Activated CD8-positive, alpha-beta T cell treated with anti-CD3 and anti-CD28 coated beads, Interleukin-2, amount 10 ng/mL, durations not matched to agents 7 days and 5 days (primary cell): ENCODE measurements at regions of chr19 and their contacts with region 1.

Region 1: DNA sequence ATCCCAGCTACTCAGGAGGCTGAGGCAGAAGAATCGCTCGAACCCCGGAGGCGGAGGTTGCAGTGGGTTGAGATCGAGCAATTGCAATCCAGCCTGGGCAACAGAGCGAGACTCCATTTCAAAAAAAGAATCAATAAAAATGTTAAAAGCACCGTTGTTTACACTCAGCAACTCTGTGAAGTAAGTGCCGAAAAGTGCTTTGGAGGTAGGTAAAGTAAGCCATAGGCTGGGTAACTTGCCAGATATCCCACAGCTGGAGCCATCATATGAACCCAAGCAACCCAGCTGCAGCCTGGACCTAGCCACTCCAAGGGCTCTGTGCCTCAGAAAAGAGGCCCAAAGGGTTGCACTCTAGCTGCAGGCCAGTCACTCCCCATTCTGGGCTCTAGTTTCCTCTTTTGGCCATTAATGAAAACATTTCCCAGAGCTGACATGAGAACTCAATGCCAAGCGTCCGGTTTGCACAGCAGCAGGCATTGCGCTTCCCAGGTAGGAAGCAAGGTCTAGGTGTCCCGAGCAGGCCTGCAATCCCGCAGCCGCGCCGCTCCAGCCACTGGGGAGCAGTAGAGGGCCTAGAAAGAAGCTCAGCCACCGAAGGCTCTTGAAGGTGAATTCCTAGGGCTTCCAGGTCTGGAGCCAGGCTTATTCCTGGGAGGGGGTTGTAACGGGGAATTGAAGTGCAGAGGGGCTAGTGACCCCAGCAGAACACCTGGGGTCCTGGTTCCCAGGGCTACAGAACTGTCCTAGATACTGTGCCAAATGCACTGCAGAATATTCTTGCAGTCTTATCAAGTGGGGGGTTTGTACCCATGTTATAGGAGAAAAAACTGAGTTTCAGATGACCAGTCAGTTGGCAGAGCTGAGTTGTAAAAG is 4.1 kb upstream of the CD79A start:
- DNase-seq: peak; percentile 79
- ATAC-seq: no peak
- H3K4me3 Mint-ChIP-seq: no peak overlapping the region
- H3K27ac Mint-ChIP-seq: peak overlapping the region; percentile 94
- H3K4me1 Mint-ChIP-seq: peaks cover 93% of the 10 kb centered on the region
- H3K27me3 Mint-ChIP-seq: no peaks in the 10 kb centered on the region

Region 2: GRCh38 chr19:41859618-41860418 is 13.2 kb before region 1 on chr19 and contains the start of gene RPS19:
- CTCF ChIA-PET with region 1: interaction called, 41 read pairs
- POLR2A ChIA-PET with region 1: interaction called, 39 read pairs
- DNase-seq: peak; percentile 99
- ATAC-seq: peak; percentile 87
- H3K4me3 Mint-ChIP-seq: peak within 1 kb of the TSS; percentile 88
- H3K27ac Mint-ChIP-seq: peak within 1 kb of the TSS; percentile 96
- H3K4me1 Mint-ChIP-seq: peaks cover 44% of the 10 kb centered on the region
- H3K27me3 Mint-ChIP-seq: peaks cover 8% of the 10 kb centered on the region
- total RNA-seq, gene RPS19: 3,024 to 3,056 TPM

Region 3: DNA sequence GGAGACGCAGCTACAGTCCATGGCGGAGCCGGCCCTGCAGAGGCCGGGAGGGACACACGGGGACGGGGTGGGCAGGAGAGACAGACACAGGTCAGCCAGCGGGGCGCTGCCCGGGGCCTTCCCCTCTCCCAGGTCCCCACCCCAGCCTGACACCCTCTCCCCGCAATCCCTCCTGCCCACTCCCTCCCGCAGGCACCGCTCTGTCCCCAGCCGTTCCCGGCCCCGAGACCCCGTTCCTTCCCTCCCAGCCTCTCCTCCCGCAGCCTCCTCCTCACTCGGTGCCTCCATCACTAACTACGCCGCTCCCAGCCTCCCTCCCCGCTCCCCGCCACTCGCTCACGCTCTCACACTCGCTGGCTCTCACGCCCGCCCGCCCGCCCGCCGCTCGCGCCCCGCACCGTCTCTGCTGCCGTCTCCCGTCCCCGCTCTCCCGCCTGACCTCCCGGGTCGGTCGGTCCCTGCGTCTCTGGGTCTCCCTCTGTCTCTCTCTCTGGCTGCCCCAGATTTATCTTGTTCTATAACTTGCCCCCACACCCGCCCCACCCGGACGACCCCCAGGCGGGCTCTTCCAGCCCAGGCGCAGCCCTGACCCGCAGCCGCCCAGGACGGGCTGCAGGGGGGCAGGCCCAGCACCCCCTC is 40.0 kb after region 1 on chr19:
- CTCF ChIA-PET with region 1: interaction called, 13 read pairs
- POLR2A ChIA-PET with region 1: interaction called, 8 read pairs
- DNase-seq: peak; percentile 44
- ATAC-seq: peak; percentile 28
- H3K4me3 Mint-ChIP-seq: no peak overlapping the region
- H3K27ac Mint-ChIP-seq: no peak overlapping the region
- H3K4me1 Mint-ChIP-seq: peaks cover 6% of the 10 kb centered on the region
- H3K27me3 Mint-ChIP-seq: peaks cover 24% of the 10 kb centered on the region

Region 4: GRCh38 chr19:41945135-41945766 is 72.2 kb after region 1 on chr19:
- CTCF ChIA-PET with region 1: interaction called, 42 read pairs
- POLR2A ChIA-PET with region 1: interaction called, 5 read pairs
- DNase-seq: peak; percentile 93
- ATAC-seq: peak; percentile 82
- H3K4me3 Mint-ChIP-seq: peak overlapping the region; percentile 34
- H3K27ac Mint-ChIP-seq: peak overlapping the region; percentile 90
- H3K4me1 Mint-ChIP-seq: peaks cover 53% of the 10 kb centered on the region
- H3K27me3 Mint-ChIP-seq: peaks cover 23% of the 10 kb centered on the region

Region 5: GRCh38 chr19:41959056-41960053 is 86.3 kb after region 1 on chr19 and contains the start of gene RABAC1:
- CTCF ChIA-PET with region 1: interaction called, 31 read pairs
- POLR2A ChIA-PET with region 1: interaction called, 4 read pairs
- DNase-seq: peak; percentile 93
- ATAC-seq: peak; percentile 93
- H3K4me3 Mint-ChIP-seq: peak within 1 kb of the TSS; percentile 89
- H3K27ac Mint-ChIP-seq: peak within 1 kb of the TSS; percentile 78
- H3K4me1 Mint-ChIP-seq: peaks cover 20% of the 10 kb centered on the region
- H3K27me3 Mint-ChIP-seq: no peaks in the 10 kb centered on the region
- total RNA-seq, gene RABAC1: 63.0 to 63.4 TPM